ENCODE measurements at regions of chr20 and their contacts with region 1.

Region 1: GRCh38 chr20:47150403-47151152 is 205.9 kb downstream of the ZMYND8 start:
- DNase-seq: peak; percentile 62
- H3K4me3 ChIP-seq: no peak overlapping the region
- H3K27ac ChIP-seq: no peak overlapping the region
- H3K4me1 ChIP-seq: no peaks in the 10 kb centered on the region
- H3K27me3 ChIP-seq: no peaks in the 10 kb centered on the region
- CTCF ChIP-seq: peak; percentile 33

Region 2: GRCh38 chr20:46757754-46758678 is 392.6 kb before region 1 on chr20:
- intact Hi-C with region 1: loop called (anchors 5 kb)
- DNase-seq: peak; percentile 64
- H3K4me3 ChIP-seq: no peak overlapping the region
- H3K27ac ChIP-seq: no peak overlapping the region
- H3K4me1 ChIP-seq: no peaks in the 10 kb centered on the region
- H3K27me3 ChIP-seq: no peaks in the 10 kb centered on the region
- CTCF ChIP-seq: peak; percentile 98

Region 3: DNA sequence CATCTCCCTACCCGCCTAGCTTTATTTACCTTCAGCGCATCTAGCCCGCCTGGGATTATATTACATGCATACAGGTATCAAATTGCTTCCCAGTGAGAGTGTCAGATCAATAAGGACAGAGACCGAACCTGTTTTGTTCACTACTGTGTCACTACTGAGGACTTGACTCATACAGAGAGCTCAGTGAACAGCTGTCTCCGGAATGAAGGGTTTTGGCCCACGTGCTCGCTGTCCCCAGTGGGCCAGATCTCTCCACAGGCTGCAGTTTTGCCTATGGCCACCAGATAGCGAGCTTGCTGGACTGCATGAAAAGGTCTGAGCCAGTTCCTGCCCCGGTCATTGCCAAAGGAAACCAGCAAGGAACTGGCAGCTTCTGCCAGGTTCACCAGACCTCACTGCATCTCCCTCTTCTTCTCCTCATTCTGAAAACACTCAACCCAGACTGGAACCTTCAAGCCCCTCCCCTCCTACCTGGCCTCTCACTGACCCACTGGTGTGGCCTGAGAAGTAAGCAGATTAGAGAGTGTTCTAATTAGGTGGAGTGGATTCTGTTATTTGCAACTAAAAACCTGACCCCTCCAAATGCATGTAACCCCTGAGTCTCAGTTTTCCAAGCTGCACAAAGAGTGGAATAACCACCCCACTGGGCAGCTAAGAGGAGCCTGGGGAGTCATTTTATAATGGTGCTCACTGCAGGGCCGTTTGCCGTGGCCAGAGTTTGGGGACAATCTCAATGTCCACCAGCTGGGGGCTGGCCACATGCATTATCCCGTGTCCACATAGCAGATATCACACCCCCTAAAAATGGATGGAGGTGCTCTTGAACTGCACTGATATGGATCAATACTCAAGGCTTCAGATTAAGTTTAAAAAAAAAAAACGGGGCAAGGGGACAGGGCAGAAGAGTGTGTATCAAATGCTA is 55.3 kb after region 1 on chr20:
- intact Hi-C with region 1: no loop called
- DNase-seq: peak; percentile 27
- H3K4me3 ChIP-seq: no peak overlapping the region
- H3K27ac ChIP-seq: no peak overlapping the region
- H3K4me1 ChIP-seq: no peaks in the 10 kb centered on the region
- H3K27me3 ChIP-seq: no peaks in the 10 kb centered on the region
- CTCF ChIP-seq: peak; percentile 99